ENCODE measurements at regions of chr10 and their contacts with region 1.

Region 1: GRCh38 chr10:75210282-75211006 is at the start of gene VDAC2:
- DNase-seq: peak; percentile 92
- H3K4me3 ChIP-seq: peak within 1 kb of the TSS; percentile 96
- H3K27ac ChIP-seq: peak within 1 kb of the TSS; percentile 75
- H3K4me1 ChIP-seq: peaks cover 19% of the 10 kb centered on the region
- CTCF ChIP-seq: no peak
- total RNA-seq, gene VDAC2: 77.8 and 81.4 TPM in 2 replicates

Region 2: DNA sequence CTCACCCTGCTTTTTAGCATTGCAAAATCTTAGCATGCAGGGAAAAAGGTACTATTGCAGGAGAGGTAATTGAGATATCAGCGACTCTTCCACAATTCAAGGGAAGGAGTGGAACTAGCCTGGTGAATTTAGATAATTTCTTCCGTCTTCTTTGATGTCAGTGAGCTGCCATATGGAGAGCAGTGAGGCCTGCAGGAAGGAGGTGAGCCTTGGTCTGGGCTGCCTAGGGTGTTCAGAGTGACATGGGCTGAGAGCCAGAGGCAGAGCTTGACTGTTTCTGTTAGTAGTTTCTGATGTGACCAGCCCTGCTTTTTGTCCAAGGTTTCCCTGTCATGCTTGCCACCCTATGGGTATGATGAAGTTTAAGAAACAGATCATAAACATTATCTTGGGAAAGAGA is 355.4 kb before region 1 on chr10:
- CTCF ChIA-PET with region 1: interaction called, 11 read pairs
- POLR2A ChIA-PET with region 1: no interaction called
- intact Hi-C with region 1: no loop called
- DNase-seq: peak; percentile 66
- H3K4me3 ChIP-seq: peak overlapping the region; percentile 46
- H3K27ac ChIP-seq: peak overlapping the region; percentile 71
- H3K4me1 ChIP-seq: peaks cover 40% of the 10 kb centered on the region
- CTCF ChIP-seq: no peak

Region 3: DNA sequence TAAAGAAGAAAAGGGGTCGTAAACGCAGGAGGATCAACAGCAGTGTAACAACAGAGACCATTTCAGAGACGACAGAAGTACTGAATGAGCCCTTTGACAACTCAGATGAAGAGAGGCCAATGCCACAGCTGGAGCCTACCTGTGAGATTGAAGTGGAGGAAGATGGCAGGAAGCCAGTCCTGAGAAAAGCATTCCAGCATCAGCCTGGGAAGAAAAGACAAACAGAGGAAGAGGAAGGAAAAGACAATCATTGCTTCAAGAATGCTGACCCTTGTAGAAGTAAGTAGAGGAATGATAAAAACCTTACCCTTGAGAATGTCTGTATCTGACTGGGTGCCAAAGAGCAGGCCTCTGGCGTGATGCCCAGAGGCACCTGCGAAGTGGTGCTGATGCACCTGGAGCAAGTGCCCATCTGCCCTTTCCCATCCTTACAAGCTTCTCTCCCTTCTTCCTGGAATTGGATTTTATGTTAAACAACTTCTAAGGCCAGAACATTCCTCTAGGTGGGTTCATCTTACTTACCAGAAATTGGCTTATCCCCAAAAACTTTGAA is 185.4 kb before region 1 on chr10:
- CTCF ChIA-PET with region 1: no interaction called
- POLR2A ChIA-PET with region 1: no interaction called
- intact Hi-C with region 1: no loop called
- DNase-seq: no peak
- H3K4me3 ChIP-seq: no peak overlapping the region
- H3K27ac ChIP-seq: no peak overlapping the region
- H3K4me1 ChIP-seq: no peaks in the 10 kb centered on the region
- CTCF ChIP-seq: no peak

Region 4: GRCh38 chr10:75111367-75111906 is 99.0 kb before region 1 on chr10 and contains the start of gene SAMD8:
- CTCF ChIA-PET with region 1: no interaction called
- POLR2A ChIA-PET with region 1: interaction called, 4 read pairs
- intact Hi-C with region 1: loop called (anchors 5 kb)
- DNase-seq: peak; percentile 96
- H3K4me3 ChIP-seq: peak within 1 kb of the TSS; percentile 93
- H3K27ac ChIP-seq: peak within 1 kb of the TSS; percentile 93
- H3K4me1 ChIP-seq: peaks cover 20% of the 10 kb centered on the region
- CTCF ChIP-seq: peak; percentile 43
- total RNA-seq, gene SAMD8: 8.3 and 8.8 TPM in 2 replicates

Region 5: DNA sequence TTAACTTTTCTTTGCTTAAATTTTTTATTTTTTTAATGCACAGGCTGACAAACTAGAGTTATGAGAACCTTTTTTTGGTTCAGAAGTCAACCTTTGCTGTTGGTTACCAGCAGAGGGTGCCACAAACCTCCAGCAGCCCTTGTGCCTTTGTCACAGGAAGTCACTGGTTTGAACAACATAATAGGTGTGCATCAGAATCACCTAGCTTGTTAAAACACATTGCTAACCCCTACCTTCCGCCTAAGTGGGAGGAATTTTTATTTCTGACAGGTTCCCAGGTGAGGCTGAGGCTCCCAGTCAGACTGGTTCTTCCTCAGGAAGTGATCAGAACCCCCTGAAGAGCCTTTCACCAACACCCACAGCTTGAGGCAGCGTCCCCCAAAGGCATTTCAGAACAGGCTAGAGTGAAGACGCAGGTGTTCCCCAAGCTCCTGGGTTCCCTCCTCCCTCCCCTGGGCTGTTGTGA is 22.4 kb before region 1 on chr10:
- CTCF ChIA-PET with region 1: no interaction called
- POLR2A ChIA-PET with region 1: interaction called, 3 read pairs
- intact Hi-C with region 1: loop called (anchors 1 kb)
- DNase-seq: peak; percentile 77
- H3K4me3 ChIP-seq: no peak overlapping the region
- H3K27ac ChIP-seq: no peak overlapping the region
- H3K4me1 ChIP-seq: peaks cover 4% of the 10 kb centered on the region
- CTCF ChIP-seq: peak; percentile 85

Region 6: GRCh38 chr10:75197906-75198305 is 12.5 kb before region 1 on chr10:
- CTCF ChIA-PET with region 1: no interaction called
- POLR2A ChIA-PET with region 1: interaction called, 14 read pairs
- intact Hi-C with region 1: no loop called
- DNase-seq: no peak
- H3K4me3 ChIP-seq: no peak overlapping the region
- H3K27ac ChIP-seq: no peak overlapping the region
- H3K4me1 ChIP-seq: no peaks in the 10 kb centered on the region
- CTCF ChIP-seq: no peak

Region 7: GRCh38 chr10:75226656-75227055 is 16.2 kb after region 1 on chr10:
- CTCF ChIA-PET with region 1: interaction called, 6 read pairs
- POLR2A ChIA-PET with region 1: interaction called, 10 read pairs
- intact Hi-C with region 1: no loop called
- DNase-seq: no peak
- H3K4me3 ChIP-seq: no peak overlapping the region
- H3K27ac ChIP-seq: no peak overlapping the region
- H3K4me1 ChIP-seq: no peaks in the 10 kb centered on the region
- CTCF ChIP-seq: no peak

Region 8: GRCh38 chr10:75235375-75236177 is 25.1 kb after region 1 on chr10 and contains the start of gene COMTD1:
- CTCF ChIA-PET with region 1: interaction called, 9 read pairs
- POLR2A ChIA-PET with region 1: interaction called, 20 read pairs
- intact Hi-C with region 1: loop called (anchors 1 kb)
- DNase-seq: peak; percentile 95
- H3K4me3 ChIP-seq: peak within 1 kb of the TSS; percentile 80
- H3K27ac ChIP-seq: peak within 1 kb of the TSS; percentile 77
- H3K4me1 ChIP-seq: peaks cover 19% of the 10 kb centered on the region
- CTCF ChIP-seq: peak; percentile 99
- total RNA-seq, gene COMTD1: 20.7 and 37.7 TPM in 2 replicates

Region 9: DNA sequence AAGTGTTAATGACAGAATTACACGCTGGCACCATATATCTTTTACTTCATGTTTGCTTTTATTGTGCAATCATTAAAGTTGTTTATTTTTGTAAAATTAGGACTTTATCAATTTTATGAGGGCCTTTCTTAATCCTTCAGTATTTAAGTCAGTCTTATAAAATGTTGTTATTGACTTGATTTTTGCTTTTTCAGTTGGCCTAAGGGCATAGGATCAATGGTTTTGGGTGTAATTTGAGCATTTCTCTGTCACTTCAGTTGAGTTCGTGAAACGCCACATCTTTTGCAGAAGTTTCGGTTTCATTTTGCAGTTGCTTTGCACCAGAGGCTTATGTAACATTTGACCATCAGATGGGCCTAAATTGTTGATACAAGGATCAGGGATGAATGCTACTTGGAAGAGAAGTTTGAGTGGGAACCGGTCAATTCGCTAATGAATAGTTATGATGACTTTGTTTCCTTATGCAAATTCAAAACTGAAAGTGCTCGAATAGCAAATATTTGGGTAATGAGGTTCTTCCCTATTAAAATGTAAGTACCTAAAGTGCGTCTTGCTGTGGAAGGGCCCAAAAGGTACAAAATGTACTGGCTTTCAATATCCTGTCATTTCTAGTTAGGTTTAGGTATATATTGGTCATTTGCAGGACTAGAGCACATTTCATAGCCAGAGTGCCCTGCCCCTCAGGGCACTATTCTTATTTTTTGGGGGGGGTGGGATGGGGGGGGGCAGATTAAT is 561.9 kb after region 1 on chr10:
- CTCF ChIA-PET with region 1: no interaction called
- POLR2A ChIA-PET with region 1: no interaction called
- intact Hi-C with region 1: no loop called
- DNase-seq: peak; percentile 11
- H3K4me3 ChIP-seq: no peak overlapping the region
- H3K27ac ChIP-seq: no peak overlapping the region
- H3K4me1 ChIP-seq: no peaks in the 10 kb centered on the region
- CTCF ChIP-seq: no peak

Measured in OCI-LY7 (cell line).